CD4-positive, alpha-beta T cell (primary cell): ENCODE measurements at regions of chr1 and their contacts with region 1.

Region 1: DNA sequence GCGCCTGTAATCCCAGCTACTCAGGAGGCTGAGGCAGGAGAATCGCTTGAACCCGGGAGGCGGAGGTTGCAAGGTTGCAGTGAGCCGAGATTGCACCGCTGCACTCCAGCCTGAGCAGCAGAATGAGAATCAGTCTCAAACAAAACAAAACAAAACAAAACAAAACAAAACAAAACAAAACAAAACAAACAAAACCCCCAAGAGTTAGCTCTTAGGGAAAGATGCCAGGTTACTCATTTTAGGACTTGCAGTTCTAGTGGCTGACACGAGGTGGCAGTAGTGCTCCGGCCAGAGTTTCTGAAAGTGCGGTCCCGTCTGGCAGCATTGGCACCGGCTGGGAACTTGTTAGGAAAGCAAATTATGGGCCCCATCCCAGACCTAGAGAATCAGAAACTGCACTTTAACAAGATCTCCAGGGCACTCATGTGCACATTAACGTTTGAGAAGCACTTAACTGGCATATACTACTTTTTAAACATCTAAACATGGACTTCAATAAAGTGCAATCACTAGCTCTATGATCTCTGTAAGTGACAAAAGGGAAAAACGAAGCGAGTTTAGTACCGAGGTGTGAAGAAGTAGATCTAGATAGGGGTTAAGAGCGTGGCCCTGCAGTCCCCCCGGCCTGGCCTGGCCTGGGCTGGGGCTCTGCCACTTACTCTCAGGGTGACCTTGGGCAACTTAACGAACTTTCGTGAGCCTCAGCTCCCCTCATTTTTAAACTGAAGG is 41.9 kb upstream of the TNFRSF1B start:
- DNase-seq: peak; percentile 60 to 88 (median 76)
- ATAC-seq: peak; percentile 75
- H3K4me3 ChIP-seq: no peak overlapping the region
- H3K4me3 Mint-ChIP-seq: peak overlapping the region; percentile 71
- H3K27ac ChIP-seq: no peak overlapping the region
- H3K27ac Mint-ChIP-seq: peak overlapping the region; percentile 24
- H3K4me1 ChIP-seq: peaks cover 50% of the 10 kb centered on the region
- H3K4me1 Mint-ChIP-seq: peaks cover 45% of the 10 kb centered on the region
- H3K27me3 ChIP-seq: no peaks in the 10 kb centered on the region
- H3K27me3 Mint-ChIP-seq: no peaks in the 10 kb centered on the region
- CTCF ChIP-seq: peak; percentile 97

Region 2: GRCh38 chr1:11838349-11839272 is 286.2 kb before region 1 on chr1:
- CTCF ChIA-PET with region 1: no interaction called
- POLR2A ChIA-PET with region 1: no interaction called
- intact Hi-C with region 1: loop called in 1 of 2 experiments (anchors 5 kb)
- DNase-seq: peak; percentile 55 to 84 (median 70)
- ATAC-seq: peak; percentile 98
- H3K4me3 ChIP-seq: no peak overlapping the region
- H3K4me3 Mint-ChIP-seq: no peak overlapping the region
- H3K27ac ChIP-seq: no peak overlapping the region
- H3K27ac Mint-ChIP-seq: no peak overlapping the region
- H3K4me1 ChIP-seq: peaks cover 4% of the 10 kb centered on the region
- H3K4me1 Mint-ChIP-seq: peaks cover 5% of the 10 kb centered on the region
- H3K27me3 ChIP-seq: no peaks in the 10 kb centered on the region
- H3K27me3 Mint-ChIP-seq: no peaks in the 10 kb centered on the region
- CTCF ChIP-seq: peak; percentile 99

Region 3: GRCh38 chr1:12150456-12151200 is 25.8 kb after region 1 on chr1:
- CTCF ChIA-PET with region 1: interaction called, 37 read pairs
- POLR2A ChIA-PET with region 1: interaction called, 11 read pairs
- intact Hi-C with region 1: no loop called
- DNase-seq: peak in 6 of 14 experiments; percentile 25 to 84 (median 60)
- ATAC-seq: peak; percentile 84
- H3K4me3 ChIP-seq: peak overlapping the region; percentile 37
- H3K4me3 Mint-ChIP-seq: peak overlapping the region; percentile 83
- H3K27ac ChIP-seq: peak overlapping the region; percentile 58 to 87
- H3K27ac Mint-ChIP-seq: peak overlapping the region; percentile 96
- H3K4me1 ChIP-seq: peaks cover 95% of the 10 kb centered on the region
- H3K4me1 Mint-ChIP-seq: peaks cover 88% of the 10 kb centered on the region
- H3K27me3 ChIP-seq: no peaks in the 10 kb centered on the region
- H3K27me3 Mint-ChIP-seq: no peaks in the 10 kb centered on the region
- CTCF ChIP-seq: no peak

Region 4: GRCh38 chr1:12166834-12167492 is 42.1 kb after region 1 on chr1 and contains the start of gene TNFRSF1B:
- CTCF ChIA-PET with region 1: interaction called, 41 read pairs
- POLR2A ChIA-PET with region 1: interaction called, 6 read pairs
- intact Hi-C with region 1: loop called in 1 of 2 experiments (anchors 2 kb)
- DNase-seq: peak in 13 of 14 experiments; percentile 37 to 85 (median 60)
- ATAC-seq: peak; percentile 50
- H3K4me3 ChIP-seq: peak within 1 kb of the TSS; percentile 94
- H3K4me3 Mint-ChIP-seq: peak within 1 kb of the TSS; percentile 99
- H3K27ac ChIP-seq: peak within 1 kb of the TSS; percentile 82 to 83
- H3K27ac Mint-ChIP-seq: peak within 1 kb of the TSS; percentile 96
- H3K4me1 ChIP-seq: peaks cover 91% of the 10 kb centered on the region
- H3K4me1 Mint-ChIP-seq: peaks cover 66% of the 10 kb centered on the region
- H3K27me3 ChIP-seq: no peaks in the 10 kb centered on the region
- H3K27me3 Mint-ChIP-seq: no peaks in the 10 kb centered on the region
- CTCF ChIP-seq: no peak
- total RNA-seq, gene TNFRSF1B: 61.9 to 62.6 TPM

Region 5: DNA sequence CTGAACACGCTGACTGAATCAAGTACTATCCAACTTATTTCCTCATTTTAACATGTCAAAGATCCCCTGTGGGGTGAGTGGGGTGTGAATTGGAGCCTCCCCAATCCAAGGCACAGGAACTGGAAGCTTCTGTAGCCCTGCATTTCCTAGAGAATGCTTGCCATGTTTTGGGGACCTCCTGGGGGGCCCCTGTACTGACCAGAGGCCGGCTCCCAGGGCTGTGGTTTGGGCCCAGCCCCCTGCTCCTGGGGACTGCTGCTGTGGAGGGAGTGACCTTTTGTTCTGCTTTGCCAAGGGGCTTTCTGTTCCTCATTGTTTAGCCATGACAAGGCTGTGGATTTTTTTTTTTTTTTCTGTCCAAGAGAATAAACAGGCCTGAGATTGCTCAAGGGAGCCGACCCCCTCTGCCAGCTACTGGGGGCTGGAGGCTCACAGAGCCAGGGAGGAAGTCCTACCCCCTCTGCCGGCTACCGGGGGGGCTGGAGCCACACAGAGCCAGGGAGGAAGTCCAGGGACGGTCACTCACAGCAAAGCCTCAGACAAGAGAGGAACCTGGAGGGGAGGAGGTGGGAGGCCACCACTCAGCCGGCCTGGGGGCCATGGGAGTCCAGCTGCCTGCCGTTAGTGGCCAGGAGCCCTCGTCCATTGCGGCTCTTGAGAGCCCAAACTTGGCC is 59.3 kb after region 1 on chr1:
- CTCF ChIA-PET with region 1: interaction called, 67 read pairs
- POLR2A ChIA-PET with region 1: interaction called, 26 read pairs
- intact Hi-C with region 1: no loop called
- DNase-seq: peak in 2 of 14 experiments; percentile 59 to 68
- ATAC-seq: no peak
- H3K4me3 ChIP-seq: no peak overlapping the region
- H3K4me3 Mint-ChIP-seq: no peak overlapping the region
- H3K27ac ChIP-seq: peak overlapping the region; percentile 1 to 52
- H3K27ac Mint-ChIP-seq: peak overlapping the region; percentile 96
- H3K4me1 ChIP-seq: peaks cover 94% of the 10 kb centered on the region
- H3K4me1 Mint-ChIP-seq: peaks cover 50% of the 10 kb centered on the region
- H3K27me3 ChIP-seq: no peaks in the 10 kb centered on the region
- H3K27me3 Mint-ChIP-seq: no peaks in the 10 kb centered on the region
- CTCF ChIP-seq: no peak

Region 6: DNA sequence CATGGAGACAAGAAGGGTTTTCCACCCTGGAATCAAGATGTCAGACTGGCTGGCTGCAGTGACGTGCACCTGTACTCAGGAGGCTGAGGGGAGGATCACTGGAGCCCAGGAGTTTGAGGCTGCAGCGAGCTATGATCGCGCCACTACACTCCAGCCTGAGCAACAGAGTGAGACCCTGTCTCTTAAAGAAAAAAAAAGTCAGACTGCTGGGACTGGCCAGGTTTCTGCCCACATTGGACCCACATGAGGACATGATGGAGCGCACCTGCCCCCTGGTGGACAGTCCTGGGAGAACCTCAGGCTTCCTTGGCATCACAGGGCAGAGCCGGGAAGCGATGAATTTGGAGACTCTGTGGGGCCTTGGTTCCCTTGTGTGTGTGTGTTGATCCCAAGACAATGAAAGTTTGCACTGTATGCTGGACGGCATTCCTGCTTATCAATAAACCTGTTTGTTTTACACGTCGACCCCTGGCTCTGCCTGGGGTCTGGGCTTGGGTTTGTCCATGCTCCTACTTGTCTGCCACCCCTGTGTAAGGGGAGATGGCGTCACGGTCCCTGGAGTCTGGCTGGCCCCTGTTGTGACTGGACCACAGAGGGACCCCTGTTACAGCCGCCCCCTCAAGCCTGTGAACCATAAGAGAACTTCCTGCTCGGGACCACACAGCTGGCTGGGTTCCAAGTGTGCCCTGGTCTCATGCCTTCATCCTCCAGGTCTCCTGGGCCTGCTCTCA is 84.1 kb after region 1 on chr1:
- CTCF ChIA-PET with region 1: interaction called, 142 read pairs
- POLR2A ChIA-PET with region 1: interaction called, 68 read pairs
- intact Hi-C with region 1: loop called (anchors 1 kb)
- DNase-seq: peak; percentile 75 to 93 (median 85)
- ATAC-seq: peak; percentile 73
- H3K4me3 ChIP-seq: no peak overlapping the region
- H3K4me3 Mint-ChIP-seq: peak overlapping the region; percentile 21
- H3K27ac ChIP-seq: peak overlapping the region; percentile 29 to 49
- H3K27ac Mint-ChIP-seq: peak overlapping the region; percentile 83
- H3K4me1 ChIP-seq: peaks cover 55% of the 10 kb centered on the region
- H3K4me1 Mint-ChIP-seq: peaks cover 56% of the 10 kb centered on the region
- H3K27me3 ChIP-seq: no peaks in the 10 kb centered on the region
- H3K27me3 Mint-ChIP-seq: no peaks in the 10 kb centered on the region
- CTCF ChIP-seq: peak; percentile 96